ENCODE measurements at regions of chr11 and their contacts with region 1.

Region 1: DNA sequence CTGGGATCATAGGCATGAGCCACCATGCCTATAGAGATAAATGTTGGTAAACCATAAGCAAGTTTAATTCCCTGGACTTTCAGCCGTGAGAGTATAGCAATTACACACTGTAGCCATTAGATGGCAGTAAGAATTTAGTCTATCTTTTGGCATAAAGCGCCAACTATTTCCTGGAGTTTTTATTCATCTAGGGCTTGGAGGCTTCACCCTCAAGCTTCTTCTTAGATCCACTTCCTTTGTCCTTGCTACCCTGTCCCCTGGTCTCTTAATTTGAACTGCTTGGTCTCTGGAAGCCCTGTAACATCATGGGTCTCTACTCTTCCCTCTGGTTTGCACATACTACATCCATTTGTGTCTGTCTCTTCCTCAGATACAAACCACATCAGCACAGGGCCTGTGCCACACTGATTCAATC is 38.2 kb downstream of the OR10A6 start:
- DNase-seq: no peak
- ATAC-seq: peak; percentile 24

Region 2: DNA sequence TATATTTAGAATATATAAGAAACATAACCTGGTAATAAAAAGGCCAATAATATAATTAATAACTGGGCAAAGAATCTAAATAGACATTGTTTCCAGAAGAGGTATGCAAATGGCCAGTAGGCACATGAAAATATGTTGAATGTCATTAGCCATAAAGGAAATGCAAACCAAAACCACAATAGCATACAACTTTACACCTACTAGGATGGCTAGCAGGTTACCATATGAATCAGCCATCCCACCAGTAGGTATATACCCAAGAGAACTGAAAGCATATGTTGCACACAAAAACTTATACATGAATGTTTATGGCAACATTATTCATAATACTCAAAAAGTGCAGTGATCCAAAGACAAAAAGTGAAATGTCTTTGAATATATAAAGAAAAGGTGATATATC is 997.8 kb before region 1 on chr11:
- intact Hi-C with region 1: no loop called
- DNase-seq: no peak
- ATAC-seq: no peak

Region 3: GRCh38 chr11:7621090-7621489 is 271.8 kb before region 1 on chr11:
- intact Hi-C with region 1: no loop called
- DNase-seq: no peak
- ATAC-seq: no peak

Region 4: DNA sequence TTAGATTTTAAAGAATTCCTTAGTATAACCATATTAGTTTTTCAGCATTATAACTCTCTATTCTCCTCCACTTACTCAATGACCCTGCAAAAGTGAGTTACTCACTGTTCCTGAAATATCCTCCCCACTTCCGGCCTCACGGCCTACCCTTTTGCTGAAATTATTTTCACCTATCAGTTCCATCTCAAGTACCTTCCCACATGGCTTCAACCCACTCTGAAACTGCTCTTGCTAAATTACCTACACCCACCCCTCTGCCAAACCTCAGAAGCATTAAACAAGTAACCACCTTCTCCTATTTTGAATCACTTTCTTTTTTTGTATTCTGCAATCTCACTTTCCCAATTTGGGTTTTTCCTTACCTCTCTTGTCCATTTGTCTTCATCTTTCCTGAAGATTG is 133.8 kb before region 1 on chr11:
- intact Hi-C with region 1: no loop called
- DNase-seq: no peak
- ATAC-seq: no peak

Region 5: DNA sequence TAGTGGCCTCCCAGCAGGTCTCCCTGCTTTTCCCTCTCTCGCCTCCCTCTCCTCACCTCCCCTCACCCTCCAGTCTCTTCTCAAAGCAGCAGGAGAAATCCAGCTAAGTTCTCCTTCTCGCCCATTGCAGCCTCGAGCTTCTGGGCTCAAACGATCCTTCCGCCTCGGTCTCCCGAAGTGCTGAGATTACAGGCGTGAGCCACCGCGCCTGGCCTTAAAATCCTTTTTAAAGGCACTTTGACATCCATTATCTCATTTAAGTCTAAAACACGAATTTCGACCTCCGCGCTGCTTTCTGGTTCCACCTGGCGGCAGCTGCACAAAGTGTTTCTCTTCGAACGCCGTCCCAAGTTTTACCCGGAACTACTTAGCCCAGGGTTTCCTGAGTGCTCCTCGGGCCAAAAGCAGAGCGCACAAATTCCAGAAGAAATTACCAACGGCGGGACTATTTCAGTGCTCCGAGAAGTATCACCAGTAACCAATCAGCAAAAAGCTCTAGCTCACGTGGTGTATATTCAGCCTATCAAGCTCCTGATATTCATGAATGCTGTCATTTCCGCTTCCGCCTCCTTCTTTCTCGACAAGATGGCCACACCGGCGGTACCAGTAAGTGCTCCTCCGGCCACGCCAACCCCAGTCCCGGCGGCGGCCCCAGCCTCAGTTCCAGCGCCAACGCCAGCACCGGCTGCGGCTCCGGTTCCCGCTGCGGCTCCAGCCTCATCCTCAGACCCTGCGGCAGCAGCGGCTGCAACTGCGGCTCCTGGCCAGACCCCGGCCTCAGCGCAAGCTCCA is 94.1 kb after region 1 on chr11 and contains the start of gene EIF3F:
- intact Hi-C with region 1: loop called (anchors 5 kb)
- DNase-seq: peak; percentile 91
- ATAC-seq: peak; percentile 100
- total RNA-seq, gene EIF3F: 164 TPM

Measured in sciatic nerve (tissue), 2 donors.